Mammary epithelial cell (primary cell): ENCODE measurements at regions of chr20 and their contacts with region 1.

Region 1: DNA sequence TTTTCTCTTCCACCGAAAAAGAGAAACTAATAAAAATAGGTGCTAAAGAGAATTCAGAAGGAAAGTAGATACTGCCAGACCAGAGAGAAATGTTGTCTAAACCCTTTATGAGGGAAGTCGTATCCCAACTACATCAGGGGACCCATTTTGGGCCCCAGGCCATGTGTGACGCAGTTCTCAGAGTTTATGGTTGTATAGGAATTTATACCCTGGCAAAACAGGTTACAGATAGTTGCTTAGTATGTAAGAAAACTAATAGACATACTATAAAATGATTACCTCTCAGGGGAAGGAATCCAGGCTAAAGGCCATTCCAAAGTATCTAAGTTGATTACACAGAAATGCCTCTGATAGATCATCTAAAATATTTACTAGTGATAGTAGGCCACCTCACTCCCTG is 28.6 kb upstream of the SLC52A3 start:
- DNase-seq: no peak
- H3K4me3 ChIP-seq: no peak overlapping the region
- H3K27ac ChIP-seq: no peak overlapping the region
- H3K4me1 ChIP-seq: no peaks in the 10 kb centered on the region
- H3K27me3 ChIP-seq: peaks cover 4% of the 10 kb centered on the region
- CTCF ChIP-seq: no peak

Region 2: GRCh38 chr20:750801-751200 is 46.1 kb before region 1 on chr20:
- CTCF ChIA-PET with region 1: no interaction called
- dilution Hi-C with region 1: no loop called
- in situ Hi-C with region 1: no loop called
- intact Hi-C with region 1: no loop called
- DNase-seq: no peak
- H3K4me3 ChIP-seq: no peak overlapping the region
- H3K27ac ChIP-seq: no peak overlapping the region
- H3K4me1 ChIP-seq: no peaks in the 10 kb centered on the region
- H3K27me3 ChIP-seq: no peaks in the 10 kb centered on the region
- CTCF ChIP-seq: no peak

Region 3: GRCh38 chr20:815914-816606 is 19.1 kb after region 1 on chr20:
- CTCF ChIA-PET with region 1: no interaction called
- dilution Hi-C with region 1: no loop called
- in situ Hi-C with region 1: no loop called
- intact Hi-C with region 1: no loop called
- DNase-seq: peak; percentile 23
- H3K4me3 ChIP-seq: no peak overlapping the region
- H3K27ac ChIP-seq: no peak overlapping the region
- H3K4me1 ChIP-seq: no peaks in the 10 kb centered on the region
- H3K27me3 ChIP-seq: no peaks in the 10 kb centered on the region
- CTCF ChIP-seq: peak; percentile 94 to 96

Region 4: GRCh38 chr20:884983-885952 is 88.3 kb after region 1 on chr20:
- CTCF ChIA-PET with region 1: no interaction called
- dilution Hi-C with region 1: loop called (anchors 5 kb)
- in situ Hi-C with region 1: no loop called
- intact Hi-C with region 1: no loop called
- DNase-seq: peak; percentile 16
- H3K4me3 ChIP-seq: no peak overlapping the region
- H3K27ac ChIP-seq: no peak overlapping the region
- H3K4me1 ChIP-seq: peaks cover 17% of the 10 kb centered on the region
- H3K27me3 ChIP-seq: no peaks in the 10 kb centered on the region
- CTCF ChIP-seq: peak in 1 of 2 donors; percentile 23